Activated T-helper 2 cell treated with anti-CD3 and anti-CD28 coated beads, Interferon-gamma antibody, Interleukin-2, Interleukin-4, amounts not matched to agents 10 μg/mL and 5 μg/mL and 100 μg/mL, durations not matched to agents 14 hours and 24 hours and 36 hours (primary cell): ENCODE measurements at regions of chr3 and their contacts with region 1.

Region 1: DNA sequence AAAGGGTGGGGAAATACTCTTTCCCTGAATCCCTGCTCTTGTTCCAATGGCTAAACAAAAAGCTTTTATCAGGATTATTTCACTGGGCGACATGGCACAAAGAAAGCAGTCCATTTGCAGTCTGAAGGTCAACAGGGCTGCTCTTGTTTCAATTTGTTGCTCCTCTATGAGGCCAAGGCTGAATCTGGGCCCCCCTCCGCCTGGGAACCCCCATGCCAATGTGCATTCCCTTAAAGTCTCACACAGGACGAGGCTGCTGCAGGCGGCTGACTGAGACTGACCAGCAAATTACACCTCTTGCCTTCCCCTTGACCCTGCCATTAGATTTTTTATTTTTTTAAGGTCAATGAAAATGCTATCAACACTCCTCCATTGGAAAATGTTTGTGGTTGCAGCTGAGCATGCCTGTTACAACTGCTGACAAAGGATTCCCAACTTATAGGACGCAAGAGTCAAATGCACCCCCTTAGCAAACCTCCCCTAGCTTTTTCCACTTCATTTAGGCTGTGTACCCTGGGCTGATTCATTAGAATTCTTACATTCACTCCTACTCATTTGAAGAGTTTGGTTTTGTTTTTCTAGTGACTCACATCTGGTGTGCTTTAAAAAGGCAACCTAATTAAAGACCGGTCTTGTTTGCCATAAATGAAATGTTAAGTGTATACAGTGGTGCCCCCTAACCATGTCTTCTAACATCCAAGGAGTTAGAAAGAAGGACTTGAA is 60.8 kb upstream of the ARHGEF3 start:
- DNase-seq: no peak
- H3K4me3 Mint-ChIP-seq: peak overlapping the region; percentile 40
- H3K27ac Mint-ChIP-seq: peak overlapping the region; percentile 86
- H3K4me1 Mint-ChIP-seq: peaks cover 72% of the 10 kb centered on the region
- H3K27me3 Mint-ChIP-seq: no peaks in the 10 kb centered on the region

Region 2: DNA sequence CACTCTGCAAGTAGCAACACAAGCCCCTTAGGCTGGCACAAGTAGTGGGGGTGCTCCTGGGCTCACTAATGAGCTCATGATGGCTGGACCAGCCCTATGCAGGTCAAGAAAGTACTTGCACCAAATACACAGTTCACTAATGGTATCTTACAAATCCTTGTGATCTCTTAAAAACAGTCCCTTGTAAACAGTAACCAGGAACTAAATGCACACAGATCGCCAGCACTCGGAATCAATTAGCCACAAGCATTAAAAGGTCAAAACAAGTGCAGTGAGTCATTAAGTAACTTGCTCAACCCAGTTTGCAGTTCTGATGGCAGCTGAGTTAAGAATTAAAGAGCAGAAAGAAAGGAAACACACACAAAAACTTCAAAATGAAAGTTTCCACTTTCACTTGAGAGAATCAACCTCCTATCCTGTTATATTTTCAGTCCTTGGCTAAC is 104.0 kb before region 1 on chr3:
- intact Hi-C with region 1: loop called (anchors 5 kb)
- DNase-seq: peak; percentile 40
- H3K4me3 Mint-ChIP-seq: peak overlapping the region; percentile 68
- H3K27ac Mint-ChIP-seq: peak overlapping the region; percentile 91
- H3K4me1 Mint-ChIP-seq: peaks cover 71% of the 10 kb centered on the region
- H3K27me3 Mint-ChIP-seq: no peaks in the 10 kb centered on the region

Region 3: GRCh38 chr3:56783644-56784447 is 78.7 kb before region 1 on chr3:
- intact Hi-C with region 1: loop called (anchors 2 kb)
- DNase-seq: peak; percentile 70
- H3K4me3 Mint-ChIP-seq: peak overlapping the region; percentile 76
- H3K27ac Mint-ChIP-seq: peak overlapping the region; percentile 95
- H3K4me1 Mint-ChIP-seq: peaks cover 80% of the 10 kb centered on the region
- H3K27me3 Mint-ChIP-seq: no peaks in the 10 kb centered on the region

Region 4: GRCh38 chr3:56825567-56826438 is 36.7 kb before region 1 on chr3:
- intact Hi-C with region 1: loop called (anchors 2 kb)
- DNase-seq: no peak
- H3K4me3 Mint-ChIP-seq: no peak overlapping the region
- H3K27ac Mint-ChIP-seq: no peak overlapping the region
- H3K4me1 Mint-ChIP-seq: peaks cover 38% of the 10 kb centered on the region
- H3K27me3 Mint-ChIP-seq: no peaks in the 10 kb centered on the region

Region 5: GRCh38 chr3:56878074-56878473 is 15.6 kb after region 1 on chr3:
- intact Hi-C with region 1: loop called (anchors 1 kb)
- DNase-seq: peak; percentile 22
- H3K4me3 Mint-ChIP-seq: peak overlapping the region; percentile 40
- H3K27ac Mint-ChIP-seq: peak overlapping the region; percentile 94
- H3K4me1 Mint-ChIP-seq: peaks cover 80% of the 10 kb centered on the region
- H3K27me3 Mint-ChIP-seq: no peaks in the 10 kb centered on the region

Region 6: DNA sequence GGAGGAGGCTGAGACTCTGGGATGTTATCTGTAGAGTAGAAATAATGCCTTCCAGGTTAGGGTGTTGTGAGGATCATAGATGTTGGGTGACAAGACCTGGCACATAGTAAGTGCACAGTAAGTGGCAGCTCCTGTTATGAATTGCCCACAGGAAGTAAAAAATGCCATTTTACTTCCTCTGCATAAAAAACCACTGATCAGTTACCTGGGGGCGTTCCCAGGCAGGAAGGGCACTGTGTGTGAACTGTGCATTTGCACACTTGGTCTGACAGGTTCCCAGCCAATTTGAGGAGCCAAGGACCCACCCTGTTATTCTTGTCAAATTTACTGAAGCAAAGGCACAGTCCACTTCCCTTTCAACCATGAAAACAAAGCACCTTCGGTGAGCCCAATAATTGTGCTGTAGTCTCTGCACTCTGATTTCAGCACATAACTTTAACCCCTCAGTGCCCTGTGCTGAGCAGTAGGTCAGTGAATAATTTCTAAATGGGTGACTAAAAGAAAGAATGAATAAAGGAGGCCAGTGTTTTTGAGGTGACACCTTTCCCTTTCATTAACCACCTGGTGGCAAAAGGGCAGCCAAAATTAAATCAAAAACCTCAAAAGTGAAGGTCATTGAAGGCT is 25.0 kb after region 1 on chr3:
- intact Hi-C with region 1: loop called (anchors 2 kb)
- DNase-seq: no peak
- H3K4me3 Mint-ChIP-seq: no peak overlapping the region
- H3K27ac Mint-ChIP-seq: peak overlapping the region; percentile 41
- H3K4me1 Mint-ChIP-seq: peaks cover 56% of the 10 kb centered on the region
- H3K27me3 Mint-ChIP-seq: no peaks in the 10 kb centered on the region

Region 7: DNA sequence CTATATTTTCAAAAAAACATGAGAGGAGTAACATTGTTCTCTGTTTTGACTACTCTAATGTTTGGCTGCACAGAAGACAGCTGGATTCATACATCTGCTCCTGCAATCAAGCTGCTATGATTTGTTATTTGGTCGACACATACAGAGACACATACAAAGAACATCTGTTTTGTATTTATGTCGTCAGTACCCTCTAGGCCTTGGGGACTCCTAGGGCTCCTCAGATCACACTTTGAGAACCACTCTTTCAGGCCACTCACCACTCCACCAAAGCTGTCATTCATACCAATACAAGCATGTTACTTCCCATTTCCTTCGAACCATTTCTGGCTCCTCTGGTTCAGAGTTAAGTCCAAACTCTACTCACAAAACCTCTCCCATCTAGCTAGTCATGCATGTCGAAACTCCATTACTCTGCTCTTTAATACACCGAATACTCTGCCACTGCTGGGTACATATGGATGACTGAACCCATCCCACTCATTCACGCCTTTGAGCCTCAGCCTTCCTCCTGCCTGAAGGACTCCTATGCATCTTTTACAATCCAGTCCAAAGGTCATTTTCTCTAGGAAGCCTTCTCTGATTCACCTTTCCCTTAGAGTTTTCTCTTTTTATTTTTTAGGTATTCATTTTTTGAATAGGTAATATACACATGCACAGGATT is 42.2 kb after region 1 on chr3:
- intact Hi-C with region 1: no loop called
- DNase-seq: no peak
- H3K4me3 Mint-ChIP-seq: no peak overlapping the region
- H3K27ac Mint-ChIP-seq: no peak overlapping the region
- H3K4me1 Mint-ChIP-seq: peaks cover 57% of the 10 kb centered on the region
- H3K27me3 Mint-ChIP-seq: no peaks in the 10 kb centered on the region

Region 8: GRCh38 chr3:56980798-56981390 is 118.4 kb after region 1 on chr3:
- intact Hi-C with region 1: loop called (anchors 1 kb)
- DNase-seq: peak; percentile 22
- H3K4me3 Mint-ChIP-seq: no peak overlapping the region
- H3K27ac Mint-ChIP-seq: peak overlapping the region; percentile 72
- H3K4me1 Mint-ChIP-seq: peaks cover 26% of the 10 kb centered on the region
- H3K27me3 Mint-ChIP-seq: no peaks in the 10 kb centered on the region